ENCODE measurements at regions of chr17 and their contacts with region 1.

Region 1: GRCh38 chr17:73478768-73479424 is 165.3 kb downstream of the SDK2 start:
- DNase-seq: peak in 1 of 2 experiments; percentile 65
- H3K4me3 ChIP-seq: no peak overlapping the region
- H3K27ac ChIP-seq: no peak overlapping the region
- H3K4me1 ChIP-seq: peaks cover 0 to 12% (median 4%) of the 10 kb centered on the region in 4 experiments; a peak in 3 of 7 replicates
- H3K27me3 ChIP-seq: peaks cover 0 to 2% (median 0%) of the 10 kb centered on the region in 4 experiments; a peak in 1 of 7 replicates
- CTCF ChIP-seq: peak; percentile 73 to 88 (median 82)
- EP300 ChIP-seq: no peak
- POLR2A ChIP-seq: no peak
- RAD21 ChIP-seq: peak; percentile 67 to 77

Region 2: GRCh38 chr17:73455050-73455687 is 23.7 kb before region 1 on chr17:
- CTCF ChIA-PET with region 1: interaction called, 10 read pairs
- POLR2A ChIA-PET with region 1: no interaction called
- DNase-seq: no peak
- H3K4me3 ChIP-seq: no peak overlapping the region
- H3K27ac ChIP-seq: no peak overlapping the region
- H3K4me1 ChIP-seq: peaks cover 0 to 2% (median 0%) of the 10 kb centered on the region in 4 experiments; a peak in 1 of 7 replicates
- H3K27me3 ChIP-seq: no peaks in the 10 kb centered on the region
- CTCF ChIP-seq: no peak
- EP300 ChIP-seq: no peak
- POLR2A ChIP-seq: no peak
- RAD21 ChIP-seq: no peak

Region 3: GRCh38 chr17:73466704-73467433 is 12.0 kb before region 1 on chr17:
- CTCF ChIA-PET with region 1: interaction called, 26 read pairs
- POLR2A ChIA-PET with region 1: no interaction called
- DNase-seq: no peak
- H3K4me3 ChIP-seq: no peak overlapping the region
- H3K27ac ChIP-seq: no peak overlapping the region
- H3K4me1 ChIP-seq: 0 out of 7 replicates have a peak, but pooled peaks cover 0 to 4% (median 0%) of the 10 kb centered on the region in 4 experiments
- H3K27me3 ChIP-seq: no peaks in the 10 kb centered on the region
- CTCF ChIP-seq: no peak
- EP300 ChIP-seq: no peak
- POLR2A ChIP-seq: no peak
- RAD21 ChIP-seq: no peak

Region 4: GRCh38 chr17:73492821-73493814 is 14.2 kb after region 1 on chr17:
- CTCF ChIA-PET with region 1: interaction called, 21 read pairs
- POLR2A ChIA-PET with region 1: interaction called, 3 read pairs
- DNase-seq: no peak
- H3K4me3 ChIP-seq: no peak overlapping the region
- H3K27ac ChIP-seq: no peak overlapping the region
- H3K4me1 ChIP-seq: peaks cover 2 to 18% (median 9%) of the 10 kb centered on the region in 4 experiments
- H3K27me3 ChIP-seq: no peaks in the 10 kb centered on the region; a peak in 1 of 7 replicates
- CTCF ChIP-seq: no peak
- EP300 ChIP-seq: no peak
- POLR2A ChIP-seq: no peak
- RAD21 ChIP-seq: no peak

Region 5: GRCh38 chr17:73536700-73537605 is 58.1 kb after region 1 on chr17:
- CTCF ChIA-PET with region 1: interaction called, 11 read pairs
- POLR2A ChIA-PET with region 1: no interaction called
- DNase-seq: no peak
- H3K4me3 ChIP-seq: no peak overlapping the region
- H3K27ac ChIP-seq: no peak overlapping the region
- H3K4me1 ChIP-seq: peaks cover 0 to 30% (median 13%) of the 10 kb centered on the region in 4 experiments; a peak in 6 of 7 replicates
- H3K27me3 ChIP-seq: no peaks in the 10 kb centered on the region
- CTCF ChIP-seq: no peak
- EP300 ChIP-seq: no peak
- POLR2A ChIP-seq: no peak
- RAD21 ChIP-seq: no peak